ENCODE measurements at regions of chr10 and their contacts with region 1.

Region 1: GRCh38 chr10:14604181-14605142 is 170.2 kb downstream of the FAM107B start:
- DNase-seq: peak; percentile 87
- ATAC-seq: peak; percentile 40
- H3K4me3 Mint-ChIP-seq: peak overlapping the region; percentile 85
- H3K27ac Mint-ChIP-seq: peak overlapping the region; percentile 99
- H3K4me1 Mint-ChIP-seq: peaks cover 72% of the 10 kb centered on the region
- H3K27me3 Mint-ChIP-seq: no peaks in the 10 kb centered on the region

Region 2: DNA sequence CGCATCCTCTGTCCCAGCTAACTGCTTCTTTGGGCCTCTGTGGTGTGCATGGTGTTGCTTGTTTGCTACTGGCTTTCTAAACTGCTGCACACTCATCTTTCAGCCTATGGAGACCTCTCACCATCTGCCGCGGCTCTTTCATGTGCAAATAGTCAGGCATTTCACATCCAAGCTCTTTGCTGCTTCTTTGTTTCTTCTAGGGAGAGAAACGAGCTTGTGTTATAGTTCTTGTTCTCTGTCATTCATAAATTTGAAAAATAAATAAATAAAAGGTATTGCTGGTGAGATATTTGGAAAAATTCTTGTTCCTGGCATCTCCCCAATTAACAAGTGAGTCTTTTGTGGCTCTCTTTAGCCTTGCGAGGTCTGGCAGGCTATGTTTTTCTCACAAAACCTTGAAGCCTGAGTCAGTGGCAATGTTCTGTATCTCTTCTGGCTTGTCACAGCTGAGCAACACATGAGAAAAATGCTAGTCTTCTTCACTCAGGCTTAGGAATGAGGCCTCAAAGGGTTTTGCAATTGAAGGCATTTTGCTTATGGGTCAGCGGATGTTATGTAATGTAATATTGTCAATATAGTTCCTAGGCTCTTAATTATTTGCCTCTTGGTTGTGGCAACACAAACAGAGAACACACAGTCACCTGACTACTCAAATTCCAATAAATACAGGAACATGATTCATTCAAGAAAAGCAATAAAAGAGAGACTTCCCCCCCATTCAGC is 547.7 kb before region 1 on chr10:
- CTCF ChIA-PET with region 1: no interaction called
- POLR2A ChIA-PET with region 1: no interaction called
- intact Hi-C with region 1: no loop called
- DNase-seq: no peak
- ATAC-seq: no peak
- H3K4me3 Mint-ChIP-seq: no peak overlapping the region
- H3K27ac Mint-ChIP-seq: no peak overlapping the region
- H3K4me1 Mint-ChIP-seq: no peaks in the 10 kb centered on the region
- H3K27me3 Mint-ChIP-seq: peaks cover 3% of the 10 kb centered on the region

Region 3: GRCh38 chr10:14499601-14499904 is 104.9 kb before region 1 on chr10:
- CTCF ChIA-PET with region 1: interaction called, 3 read pairs
- POLR2A ChIA-PET with region 1: no interaction called
- intact Hi-C with region 1: loop called in 1 of 2 experiments (anchors 2 kb)
- DNase-seq: no peak
- ATAC-seq: no peak
- H3K4me3 Mint-ChIP-seq: no peak overlapping the region
- H3K27ac Mint-ChIP-seq: no peak overlapping the region
- H3K4me1 Mint-ChIP-seq: peaks cover 14% of the 10 kb centered on the region
- H3K27me3 Mint-ChIP-seq: no peaks in the 10 kb centered on the region

Region 4: GRCh38 chr10:14571866-14572507 is 32.5 kb before region 1 on chr10:
- CTCF ChIA-PET with region 1: interaction called, 4 read pairs
- POLR2A ChIA-PET with region 1: interaction called, 8 read pairs
- intact Hi-C with region 1: loop called in 1 of 2 experiments (anchors 2 kb)
- DNase-seq: peak; percentile 78
- ATAC-seq: peak; percentile 88
- H3K4me3 Mint-ChIP-seq: peak overlapping the region; percentile 66
- H3K27ac Mint-ChIP-seq: peak overlapping the region; percentile 93
- H3K4me1 Mint-ChIP-seq: peaks cover 93% of the 10 kb centered on the region
- H3K27me3 Mint-ChIP-seq: no peaks in the 10 kb centered on the region

Region 5: GRCh38 chr10:14665304-14665703 is 60.8 kb after region 1 on chr10:
- CTCF ChIA-PET with region 1: no interaction called
- POLR2A ChIA-PET with region 1: interaction called, 11 read pairs
- intact Hi-C with region 1: loop called (anchors 1 kb)
- DNase-seq: peak; percentile 43
- ATAC-seq: peak; percentile 81
- H3K4me3 Mint-ChIP-seq: no peak overlapping the region
- H3K27ac Mint-ChIP-seq: peak overlapping the region; percentile 59
- H3K4me1 Mint-ChIP-seq: peaks cover 60% of the 10 kb centered on the region
- H3K27me3 Mint-ChIP-seq: no peaks in the 10 kb centered on the region

Region 6: DNA sequence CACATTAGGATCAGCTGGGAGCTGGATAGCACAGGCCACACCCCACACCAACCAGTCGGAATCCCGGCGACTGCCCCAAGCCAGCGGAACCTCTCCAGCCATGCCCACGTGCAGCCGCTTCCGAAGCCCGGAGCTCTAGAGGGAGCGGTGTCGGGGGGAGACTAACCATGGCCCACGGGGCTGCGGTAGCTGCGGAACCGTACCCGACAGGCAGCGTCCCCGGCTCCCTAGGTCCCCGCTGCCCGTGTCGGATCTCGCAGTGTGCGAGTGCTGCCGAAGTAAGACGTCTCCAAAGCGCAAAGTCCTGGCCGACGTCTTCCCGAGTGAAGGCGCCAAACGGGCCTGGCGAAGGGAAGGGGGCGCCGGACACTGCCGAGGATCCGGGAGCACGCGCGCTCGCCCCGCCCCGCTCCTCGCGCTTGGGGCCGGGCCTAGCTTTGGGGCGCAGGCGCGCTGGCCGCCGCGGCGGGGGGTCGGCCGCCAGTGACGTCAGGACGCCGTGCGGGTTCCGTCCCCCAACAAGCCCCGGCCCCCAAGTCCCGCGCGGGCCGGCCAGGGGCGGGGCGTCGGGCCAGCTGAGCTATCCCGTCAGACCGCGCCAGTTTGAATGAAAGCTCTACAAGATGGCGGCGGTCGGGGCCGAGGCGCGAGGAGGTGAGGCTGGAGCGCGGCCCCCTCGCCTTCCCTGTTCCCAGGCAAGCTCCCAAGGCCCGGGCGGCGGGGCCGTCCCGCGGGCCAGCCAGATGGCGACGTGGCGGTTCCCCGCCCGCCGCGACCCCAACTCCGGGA is 274.0 kb after region 1 on chr10 and contains the start of gene SUV39H2:
- CTCF ChIA-PET with region 1: no interaction called
- POLR2A ChIA-PET with region 1: no interaction called
- intact Hi-C with region 1: loop called in 1 of 2 experiments (anchors 1 kb)
- DNase-seq: peak; percentile 97
- ATAC-seq: peak; percentile 92
- H3K4me3 Mint-ChIP-seq: peak within 1 kb of the TSS; percentile 97
- H3K27ac Mint-ChIP-seq: peak within 1 kb of the TSS; percentile 93
- H3K4me1 Mint-ChIP-seq: peaks cover 37% of the 10 kb centered on the region
- H3K27me3 Mint-ChIP-seq: no peaks in the 10 kb centered on the region
- total RNA-seq, gene SUV39H2: 42.9 to 51.5 TPM

Region 7: GRCh38 chr10:15168781-15169554 is 564.5 kb after region 1 on chr10:
- CTCF ChIA-PET with region 1: no interaction called
- POLR2A ChIA-PET with region 1: no interaction called
- intact Hi-C with region 1: loop called in 1 of 2 experiments (anchors 2 kb)
- DNase-seq: peak; percentile 100
- ATAC-seq: peak; percentile 80
- H3K4me3 Mint-ChIP-seq: peak overlapping the region; percentile 70
- H3K27ac Mint-ChIP-seq: peak overlapping the region; percentile 85
- H3K4me1 Mint-ChIP-seq: peaks cover 55% of the 10 kb centered on the region
- H3K27me3 Mint-ChIP-seq: no peaks in the 10 kb centered on the region